PC-9 (cell line): ENCODE measurements at regions of chr12 and their contacts with region 1.

Region 1: DNA sequence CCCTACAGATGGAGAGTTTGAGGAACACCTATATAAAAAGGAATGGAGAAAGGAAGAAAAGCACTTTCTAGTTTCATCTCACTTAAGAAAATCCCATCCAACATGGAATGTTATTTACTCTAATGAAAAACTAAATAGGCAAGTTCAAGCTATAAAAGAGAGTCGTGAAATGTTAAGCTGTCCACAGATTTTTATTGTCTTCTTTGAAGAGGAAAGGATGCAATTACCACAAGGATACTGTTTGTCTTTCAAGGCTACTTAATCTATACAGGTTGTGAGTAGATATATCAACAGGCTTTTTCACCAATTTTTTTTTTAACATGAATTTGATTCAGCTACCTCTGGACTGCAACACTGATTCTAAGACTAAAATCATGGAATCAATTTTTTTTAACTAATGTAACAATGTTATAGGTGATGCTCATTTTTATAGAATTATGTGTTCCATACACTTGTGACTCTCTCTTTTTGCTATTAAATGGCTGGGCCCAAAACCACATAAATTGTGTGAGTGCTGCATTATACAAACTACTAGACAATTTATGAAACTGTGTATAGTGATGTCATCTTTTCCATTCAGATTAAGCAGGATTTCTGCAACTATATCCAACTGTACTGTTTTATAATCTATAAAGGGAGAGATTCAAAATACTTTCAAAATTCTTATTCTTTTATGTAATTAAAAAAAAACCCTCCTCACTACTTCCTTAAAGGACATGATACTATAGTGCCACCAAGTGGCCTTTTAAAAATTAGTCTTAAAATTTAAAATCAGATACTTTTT is 26.8 kb upstream of the BMAL2 start:
- DNase-seq: peak in 1 of 2 experiments; percentile 59
- H3K4me3 ChIP-seq: no peak overlapping the region
- H3K27ac ChIP-seq: no peak overlapping the region
- H3K4me1 ChIP-seq: no peaks in the 10 kb centered on the region
- H3K27me3 ChIP-seq: no peaks in the 10 kb centered on the region
- CTCF ChIP-seq: peak; percentile 84

Region 2: GRCh38 chr12:26853303-26854030 is 452.4 kb before region 1 on chr12:
- CTCF ChIA-PET with region 1: interaction called, 13 read pairs
- POLR2A ChIA-PET with region 1: no interaction called
- intact Hi-C with region 1: loop called (anchors 2 kb)
- DNase-seq: peak in 1 of 2 experiments; percentile 71
- H3K4me3 ChIP-seq: no peak overlapping the region
- H3K27ac ChIP-seq: no peak overlapping the region
- H3K4me1 ChIP-seq: peaks cover 5% of the 10 kb centered on the region
- H3K27me3 ChIP-seq: no peaks in the 10 kb centered on the region
- CTCF ChIP-seq: peak; percentile 83

Region 3: DNA sequence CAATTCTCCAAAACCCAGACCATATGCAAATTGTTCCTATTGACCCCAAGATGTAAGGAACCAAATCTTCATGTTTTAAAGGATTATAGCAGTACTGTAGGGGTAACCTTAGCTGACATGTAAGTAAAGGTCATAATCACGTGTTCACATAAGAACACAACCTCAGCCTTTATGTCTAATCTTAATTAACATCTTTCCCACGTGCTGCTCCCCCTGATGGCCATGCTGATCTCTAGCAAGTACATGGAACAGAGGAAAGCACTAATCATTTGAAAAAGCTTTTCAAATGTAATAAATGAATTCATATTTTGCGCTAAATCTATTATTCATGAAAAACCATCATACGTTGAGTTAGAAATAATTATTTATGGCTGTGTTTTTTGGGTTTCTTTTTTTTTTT is 442.4 kb before region 1 on chr12:
- CTCF ChIA-PET with region 1: no interaction called
- POLR2A ChIA-PET with region 1: no interaction called
- intact Hi-C with region 1: no loop called
- DNase-seq: no peak
- H3K4me3 ChIP-seq: no peak overlapping the region
- H3K27ac ChIP-seq: no peak overlapping the region
- H3K4me1 ChIP-seq: no peaks in the 10 kb centered on the region
- H3K27me3 ChIP-seq: no peaks in the 10 kb centered on the region
- CTCF ChIP-seq: no peak; the same call in 1 of the 2 replicates

Region 4: DNA sequence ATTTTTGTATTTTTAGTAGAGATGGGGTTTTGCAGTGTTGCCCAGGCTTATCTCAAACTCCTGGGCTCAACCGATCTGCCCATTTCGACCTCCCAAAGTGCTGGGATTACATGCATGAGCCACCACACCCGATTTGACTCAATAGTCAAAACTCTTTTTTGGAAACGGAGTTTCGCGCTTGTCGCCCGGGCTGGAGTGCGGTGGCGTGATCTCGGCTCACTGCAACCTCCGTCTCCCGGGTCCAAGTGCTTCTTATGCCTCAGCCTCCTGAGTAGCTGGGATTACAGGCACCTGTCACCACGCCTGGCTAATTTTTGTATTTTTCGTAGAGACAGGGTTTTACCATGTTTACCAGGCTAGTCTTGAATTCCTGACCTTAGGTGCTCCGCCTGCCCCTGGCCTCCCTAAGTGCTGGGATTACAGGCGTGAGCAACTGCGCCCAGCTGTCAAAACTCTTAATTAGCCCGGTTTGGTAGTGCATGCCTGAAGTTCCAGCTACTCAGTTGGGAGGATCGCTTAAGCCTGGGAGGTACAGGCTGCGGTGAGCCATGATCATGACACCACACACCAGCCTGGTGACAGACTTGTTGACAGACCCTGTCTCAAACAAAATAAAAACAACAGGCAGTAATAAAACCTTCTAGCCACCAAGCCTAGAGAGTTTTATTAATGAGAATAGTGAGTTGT is 271.1 kb before region 1 on chr12:
- CTCF ChIA-PET with region 1: no interaction called
- POLR2A ChIA-PET with region 1: no interaction called
- intact Hi-C with region 1: loop called (anchors 1 kb)
- DNase-seq: no peak
- H3K4me3 ChIP-seq: no peak overlapping the region
- H3K27ac ChIP-seq: no peak overlapping the region
- H3K4me1 ChIP-seq: no peaks in the 10 kb centered on the region
- H3K27me3 ChIP-seq: no peaks in the 10 kb centered on the region
- CTCF ChIP-seq: no peak

Region 5: DNA sequence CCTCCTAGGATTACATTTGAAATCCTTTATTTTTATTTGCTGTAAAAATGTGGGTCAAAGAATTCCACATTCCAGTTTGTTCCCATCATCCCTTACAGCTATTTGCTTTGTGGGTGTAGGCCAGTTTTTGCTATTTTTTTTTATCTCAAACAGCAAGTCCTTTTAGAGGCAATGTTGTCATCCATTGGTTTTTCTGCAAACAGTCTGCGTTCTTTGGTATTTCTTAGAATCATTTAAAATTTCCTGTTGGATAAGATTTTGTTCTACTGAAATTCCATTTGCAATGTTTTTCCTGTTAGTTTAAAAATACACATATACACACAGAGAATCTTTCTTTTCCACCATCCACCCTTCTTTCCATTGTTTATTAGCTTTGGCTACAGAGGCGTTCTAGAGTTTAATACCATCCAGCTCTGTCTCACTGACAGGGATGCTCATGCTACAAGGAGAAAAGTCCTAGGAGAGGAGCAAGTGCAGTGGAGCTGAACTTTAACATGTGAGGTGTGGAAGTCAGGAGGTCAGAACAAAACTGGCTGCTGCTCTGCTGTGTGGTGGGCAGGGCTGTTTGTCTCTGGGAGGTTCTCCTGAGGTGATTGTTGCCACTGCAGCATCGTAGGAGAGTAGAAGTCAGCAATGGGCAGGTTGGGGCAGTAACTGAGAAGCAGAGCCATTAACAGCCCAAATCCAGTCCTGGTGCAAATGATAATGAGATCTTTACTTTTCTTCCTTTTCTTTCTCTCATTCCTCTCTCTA is 114.9 kb before region 1 on chr12:
- CTCF ChIA-PET with region 1: interaction called, 19 read pairs
- POLR2A ChIA-PET with region 1: no interaction called
- intact Hi-C with region 1: no loop called
- DNase-seq: peak in 1 of 2 experiments; percentile 86
- H3K4me3 ChIP-seq: 0 out of 2 replicates have a peak overlapping the region, but pooled peaks have one; percentile 19
- H3K27ac ChIP-seq: peak overlapping the region; percentile 79
- H3K4me1 ChIP-seq: peaks cover 36% of the 10 kb centered on the region
- H3K27me3 ChIP-seq: no peaks in the 10 kb centered on the region
- CTCF ChIP-seq: no peak

Region 6: DNA sequence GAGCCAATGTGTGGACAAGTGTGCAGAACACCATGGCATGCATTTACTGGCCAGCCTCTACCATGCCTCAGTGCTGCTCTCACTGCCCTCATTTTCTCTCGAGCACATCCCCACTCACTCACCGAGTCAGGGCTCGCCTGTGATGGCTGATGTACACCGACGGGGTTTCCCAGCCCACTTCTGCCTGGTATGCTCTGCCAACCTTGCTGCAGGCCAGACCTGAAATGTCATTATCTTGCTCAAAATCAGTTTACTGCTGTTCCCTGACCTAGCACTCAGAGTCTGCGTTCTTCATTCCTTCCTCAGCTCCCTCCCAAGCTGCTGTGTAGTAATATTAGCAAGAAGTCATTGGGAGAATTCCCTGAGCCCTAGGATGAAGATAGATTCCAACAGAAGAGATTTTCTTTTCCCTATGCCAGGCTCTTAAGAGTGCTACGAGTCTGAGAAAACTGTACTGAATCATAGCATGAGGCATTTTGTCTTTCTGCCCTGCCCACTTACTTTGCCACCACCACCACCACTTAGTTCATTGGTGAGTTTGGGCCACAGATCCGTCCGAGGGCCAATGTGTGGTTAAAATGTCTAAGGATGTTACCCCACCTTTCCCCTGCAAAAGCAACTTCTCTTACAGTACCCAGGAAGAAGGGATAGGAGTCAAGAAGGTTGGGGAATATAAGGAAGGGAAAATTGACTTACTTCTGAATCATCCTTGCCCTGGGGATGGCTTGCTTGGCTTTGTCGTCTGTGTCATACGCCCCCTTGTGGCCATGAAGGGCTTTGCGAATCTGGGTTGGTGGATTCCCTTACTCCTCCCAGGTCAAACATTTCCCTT is 77.8 kb after region 1 on chr12:
- CTCF ChIA-PET with region 1: interaction called, 9 read pairs
- POLR2A ChIA-PET with region 1: no interaction called
- intact Hi-C with region 1: loop called (anchors 2 kb)
- DNase-seq: peak; percentile 70 to 89
- H3K4me3 ChIP-seq: no peak overlapping the region
- H3K27ac ChIP-seq: peak overlapping the region; percentile 61
- H3K4me1 ChIP-seq: peaks cover 8% of the 10 kb centered on the region; the same call in 1 of the 2 replicates
- H3K27me3 ChIP-seq: no peaks in the 10 kb centered on the region
- CTCF ChIP-seq: peak; percentile 95